Psoas muscle (tissue), 8 donors: ENCODE measurements at regions of chr3 and their contacts with region 1.

Region 1: DNA sequence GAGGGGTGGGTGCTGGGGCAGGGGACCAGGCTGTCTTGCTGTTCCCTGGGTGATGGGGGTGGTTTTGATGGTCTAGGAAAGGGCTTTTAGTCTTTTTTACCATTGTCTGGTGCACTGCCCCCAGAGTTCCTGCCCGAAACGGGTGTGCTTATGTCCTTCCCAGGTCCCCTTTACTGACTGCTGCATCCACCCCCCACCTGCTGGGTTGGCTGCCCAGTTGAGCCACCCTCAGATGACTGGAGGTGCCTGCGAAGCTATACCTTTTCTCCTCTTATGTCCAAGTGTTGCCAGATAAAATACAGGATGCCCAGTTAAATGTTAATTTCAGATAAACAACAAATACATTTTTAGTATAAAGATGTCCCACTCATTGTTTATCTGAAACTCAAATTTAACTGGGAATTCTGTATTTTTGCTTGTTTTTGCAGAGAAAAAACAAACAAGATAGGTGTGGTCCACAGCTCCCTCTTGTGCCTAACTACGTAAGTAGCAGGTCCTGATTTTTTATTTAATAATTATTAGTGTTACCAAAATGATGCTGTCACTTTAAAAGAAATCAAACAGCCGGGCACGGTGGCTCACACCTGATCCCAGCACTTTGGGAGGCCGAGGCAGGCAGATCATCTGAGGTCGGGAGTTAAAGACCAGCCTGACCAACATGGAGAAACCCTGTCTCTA is 6.1 kb upstream of the RPP14 start:
- DNase-seq: no peak
- ATAC-seq: peak in 1 of 4 donors; percentile 64
- H3K4me3 ChIP-seq: no peak overlapping the region
- H3K27ac ChIP-seq: no peak overlapping the region
- H3K4me1 ChIP-seq: no peaks in the 10 kb centered on the region
- H3K27me3 ChIP-seq: peaks cover 0 to 1% (median 0%) of the 10 kb centered on the region in 3 donors
- CTCF ChIP-seq: peak; percentile 48

Region 2: DNA sequence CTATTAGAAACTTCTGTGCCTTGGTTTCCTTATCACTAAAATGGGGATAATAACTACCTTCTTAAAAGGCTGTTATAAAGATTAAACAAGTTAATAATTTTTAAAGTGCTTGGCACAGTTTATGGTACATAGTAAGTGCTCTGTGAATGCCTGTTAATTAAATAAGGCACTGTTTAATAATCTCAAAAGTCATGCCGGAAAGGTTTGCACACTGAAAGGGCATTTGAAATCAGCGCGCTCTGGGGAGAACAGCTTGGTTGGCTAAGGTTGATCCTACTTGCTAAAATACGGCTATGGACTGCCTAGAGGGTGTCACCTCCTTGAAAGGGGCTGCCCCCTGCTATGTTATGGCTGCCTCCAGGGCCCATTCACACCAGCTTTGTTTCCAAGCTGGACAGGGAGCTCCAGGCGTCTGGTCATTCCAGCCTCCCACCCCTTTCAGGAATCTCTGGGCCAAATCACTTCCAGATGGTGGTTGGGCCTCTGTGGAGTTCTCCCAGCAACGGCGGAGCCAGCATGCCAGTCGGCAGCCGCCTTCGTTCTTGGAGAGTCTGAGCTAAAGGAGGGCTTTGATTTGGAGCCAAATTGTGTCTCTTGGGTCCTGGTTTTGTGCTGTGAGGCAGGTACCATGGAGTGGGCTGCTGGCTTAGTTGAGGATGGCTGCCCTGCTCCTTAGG is 285.9 kb before region 1 on chr3:
- intact Hi-C with region 1: loop called in 1 of 2 experiments (anchors 10 kb)
- DNase-seq: peak; percentile 55 to 69
- ATAC-seq: peak in 3 of 4 donors; percentile 43 to 47 (median 43)
- H3K4me3 ChIP-seq: no peak overlapping the region
- H3K27ac ChIP-seq: no peak overlapping the region
- H3K4me1 ChIP-seq: peaks cover 3% of the 10 kb centered on the region
- H3K27me3 ChIP-seq: peaks cover 0 to 10% (median 1%) of the 10 kb centered on the region in 3 donors
- CTCF ChIP-seq: no peak

Region 3: DNA sequence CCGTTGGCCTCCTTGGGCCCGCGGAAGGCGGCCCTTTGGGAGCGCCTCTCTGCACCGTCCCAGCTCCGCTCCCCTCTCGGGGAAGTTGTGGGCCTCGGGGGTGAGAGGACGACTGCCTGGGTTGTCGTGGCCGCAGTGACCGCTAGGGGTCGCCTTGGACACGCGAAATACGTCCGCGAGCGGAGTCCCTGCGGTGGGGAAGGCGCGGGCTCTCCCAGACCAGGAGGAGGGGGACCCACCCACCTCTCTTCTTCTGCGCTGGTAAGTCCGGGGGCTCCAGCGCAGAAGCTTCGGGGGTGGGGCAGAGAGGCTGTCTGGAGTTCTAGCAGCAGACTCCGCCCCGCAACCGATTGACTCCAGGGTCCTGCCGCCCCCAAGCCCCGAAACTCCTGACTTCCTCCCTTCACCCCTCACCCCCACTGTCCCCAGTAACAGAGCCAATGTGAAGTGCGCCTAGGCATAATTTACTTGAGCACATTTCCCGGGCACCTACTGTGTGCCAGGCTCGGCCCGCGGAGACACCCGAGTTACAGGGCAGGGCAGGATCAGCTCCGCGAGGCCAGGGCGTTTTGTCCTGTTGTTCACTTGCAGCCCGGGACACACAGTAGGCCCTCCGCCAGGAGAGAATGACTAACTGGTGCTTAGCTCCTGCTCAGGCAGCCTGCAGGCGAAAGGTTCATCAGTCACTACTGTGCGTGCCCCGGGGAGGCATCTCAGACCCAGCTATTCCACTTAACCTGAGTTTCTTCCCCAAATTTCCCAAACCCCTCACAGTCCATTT is 122.0 kb before region 1 on chr3:
- intact Hi-C with region 1: loop called (anchors 2 to 5 kb)
- DNase-seq: peak; percentile 90 to 95
- ATAC-seq: peak; percentile 93 to 99 (median 94)
- H3K4me3 ChIP-seq: peak overlapping the region; percentile 61
- H3K27ac ChIP-seq: no peak overlapping the region
- H3K4me1 ChIP-seq: peaks cover 3% of the 10 kb centered on the region
- H3K27me3 ChIP-seq: no peaks in the 10 kb centered on the region
- CTCF ChIP-seq: peak; percentile 94

Region 4: GRCh38 chr3:58188173-58188564 is 111.8 kb before region 1 on chr3:
- intact Hi-C with region 1: loop called in 1 of 2 experiments (anchors 2 kb)
- DNase-seq: no peak
- ATAC-seq: no peak
- H3K4me3 ChIP-seq: no peak overlapping the region
- H3K27ac ChIP-seq: no peak overlapping the region
- H3K4me1 ChIP-seq: no peaks in the 10 kb centered on the region
- H3K27me3 ChIP-seq: no peaks in the 10 kb centered on the region
- CTCF ChIP-seq: no peak

Region 5: DNA sequence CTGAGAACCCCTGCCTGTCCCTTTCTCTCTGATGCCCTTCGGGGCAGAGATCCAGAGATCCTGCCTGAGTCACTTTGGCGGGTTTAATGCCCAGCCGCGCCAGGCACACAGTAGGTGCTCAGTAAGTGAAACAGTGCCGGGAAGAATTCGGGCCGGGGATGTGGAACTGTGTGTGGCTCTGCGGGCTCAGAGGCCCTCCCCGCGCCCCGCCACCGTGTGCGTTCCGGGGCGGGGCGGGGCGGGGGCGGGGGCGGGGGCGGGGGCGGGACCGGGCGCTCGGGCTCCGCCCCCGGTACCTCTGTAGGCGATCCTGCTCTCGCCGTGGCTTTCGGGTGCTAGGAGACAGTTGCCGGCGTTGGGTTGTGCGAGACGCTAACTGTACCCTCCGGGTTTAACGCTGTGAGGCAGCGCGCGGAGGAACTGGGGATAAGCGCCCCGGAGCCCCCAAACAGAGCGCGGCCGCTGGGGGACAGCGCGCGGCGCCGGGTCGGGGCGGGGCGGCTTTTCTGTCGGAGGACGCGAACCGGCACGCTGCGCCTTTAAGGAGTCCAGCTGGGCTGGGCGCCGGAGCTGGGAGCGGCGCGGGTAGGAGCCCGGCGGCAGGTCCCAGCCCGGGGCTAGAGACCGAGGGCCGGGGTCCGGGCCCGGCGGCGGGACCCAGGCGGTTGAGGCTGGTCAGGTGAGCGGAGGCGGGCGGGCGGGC is 62.6 kb before region 1 on chr3 and contains the start of gene ABHD6:
- intact Hi-C with region 1: loop called (anchors 2 to 5 kb)
- DNase-seq: peak; percentile 79 to 88
- ATAC-seq: peak; percentile 90 to 94 (median 94)
- H3K4me3 ChIP-seq: peak within 1 kb of the TSS; percentile 92
- H3K27ac ChIP-seq: peak within 1 kb of the TSS; percentile 74
- H3K4me1 ChIP-seq: peaks cover 14% of the 10 kb centered on the region
- H3K27me3 ChIP-seq: no peaks in the 10 kb centered on the region
- CTCF ChIP-seq: no peak
- total RNA-seq, gene ABHD6: 2.0 to 7.2 (median 5.1) TPM

Region 6: DNA sequence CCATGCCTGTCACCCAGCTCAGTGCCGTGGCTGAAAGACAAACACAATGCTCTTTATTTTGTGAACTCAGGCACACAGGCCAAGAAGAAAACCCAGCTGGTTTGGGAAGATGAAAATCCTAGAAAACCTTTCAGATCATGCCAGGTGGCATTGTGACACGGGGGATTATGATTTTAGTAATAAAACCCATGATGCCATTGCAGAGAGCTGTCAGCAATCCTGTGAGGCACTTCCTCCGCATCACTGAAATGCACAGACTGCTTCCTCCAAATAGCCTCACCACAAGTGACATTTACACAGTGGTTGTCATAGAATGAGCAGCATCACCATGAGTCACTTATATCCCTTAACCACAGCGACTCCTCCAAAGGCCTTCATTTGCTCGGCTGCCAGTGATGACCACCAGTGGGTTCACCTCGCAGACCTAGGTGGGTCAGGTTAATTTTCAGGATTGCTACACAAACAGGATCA is 39.7 kb before region 1 on chr3:
- intact Hi-C with region 1: no loop called
- DNase-seq: no peak
- ATAC-seq: peak in 2 of 4 donors; percentile 58 to 92
- H3K4me3 ChIP-seq: no peak overlapping the region
- H3K27ac ChIP-seq: no peak overlapping the region
- H3K4me1 ChIP-seq: no peaks in the 10 kb centered on the region
- H3K27me3 ChIP-seq: no peaks in the 10 kb centered on the region
- CTCF ChIP-seq: no peak